ENCODE measurements at regions of chr2 and their contacts with region 1.

Region 1: GRCh38 chr2:111652038-111652437 is 232.0 kb downstream of the ANAPC1 start:
- DNase-seq: no peak
- H3K4me3 Mint-ChIP-seq: no peak overlapping the region
- H3K27ac Mint-ChIP-seq: no peak overlapping the region
- H3K4me1 Mint-ChIP-seq: peaks cover 22% of the 10 kb centered on the region
- H3K27me3 Mint-ChIP-seq: peaks cover 31% of the 10 kb centered on the region

Region 2: DNA sequence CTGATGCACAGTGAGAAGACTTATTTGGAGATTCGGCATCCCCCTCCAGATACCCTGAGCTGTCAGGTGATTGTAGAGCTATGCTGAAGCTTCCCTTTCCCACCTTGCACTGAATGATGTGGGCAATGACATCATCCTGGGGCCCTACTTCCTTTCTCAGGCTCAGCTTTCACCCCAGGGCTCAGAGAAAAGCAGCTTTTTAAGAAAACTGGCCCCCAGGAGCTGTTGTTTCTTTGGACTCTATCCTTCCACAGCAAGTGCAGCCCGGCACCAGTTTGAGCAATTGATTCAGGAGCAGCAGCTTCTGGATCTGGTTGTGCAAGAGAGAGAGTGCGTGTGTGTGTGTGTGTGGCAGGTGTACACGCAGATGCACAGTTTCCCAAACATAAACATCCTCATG is 19.4 kb before region 1 on chr2:
- intact Hi-C with region 1: loop called (anchors 2 kb)
- DNase-seq: peak; percentile 41
- H3K4me3 Mint-ChIP-seq: peak overlapping the region; percentile 20
- H3K27ac Mint-ChIP-seq: peak overlapping the region; percentile 89
- H3K4me1 Mint-ChIP-seq: peaks cover 31% of the 10 kb centered on the region
- H3K27me3 Mint-ChIP-seq: no peaks in the 10 kb centered on the region